Colonic mucosa (tissue), 4 donors: ENCODE measurements at regions of chr4 and their contacts with region 1.

Region 1: GRCh38 chr4:139295206-139295941 is 5.9 kb upstream of the NAA15 start:
- DNase-seq: peak; percentile 99
- H3K4me3 ChIP-seq: peak overlapping the region; percentile 86
- H3K27ac ChIP-seq: peak overlapping the region; percentile 83
- H3K4me1 ChIP-seq: no peaks in the 10 kb centered on the region
- H3K27me3 ChIP-seq: no peaks in the 10 kb centered on the region
- CTCF ChIP-seq: peak; percentile 97

Region 2: GRCh38 chr4:139030614-139031235 is 264.6 kb before region 1 on chr4:
- intact Hi-C with region 1: loop called (anchors 10 kb)
- DNase-seq: peak; percentile 74
- H3K4me3 ChIP-seq: no peak overlapping the region
- H3K27ac ChIP-seq: no peak overlapping the region
- H3K4me1 ChIP-seq: no peaks in the 10 kb centered on the region
- H3K27me3 ChIP-seq: no peaks in the 10 kb centered on the region
- CTCF ChIP-seq: peak; percentile 65

Region 3: DNA sequence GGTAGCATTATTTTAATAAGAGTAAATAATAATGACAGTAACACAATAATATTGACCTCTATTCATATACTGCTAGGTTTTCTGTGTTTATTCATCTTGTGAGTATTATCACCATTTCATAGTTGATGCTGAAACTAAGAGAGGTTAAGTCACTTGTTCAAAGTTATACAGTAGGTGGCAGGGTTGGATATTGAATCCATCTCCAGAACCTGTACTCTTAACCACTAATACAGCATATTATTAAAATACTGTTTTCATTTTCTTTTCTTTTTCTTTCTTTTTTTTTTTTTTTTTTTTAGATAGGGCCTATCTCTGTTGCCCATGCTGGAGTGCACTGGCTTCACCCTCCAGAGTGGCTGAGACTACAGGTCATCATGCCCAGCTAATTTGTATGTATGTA is 111.2 kb before region 1 on chr4:
- intact Hi-C with region 1: loop called (anchors 5 kb)
- DNase-seq: no peak
- H3K4me3 ChIP-seq: no peak overlapping the region
- H3K27ac ChIP-seq: no peak overlapping the region
- H3K4me1 ChIP-seq: no peaks in the 10 kb centered on the region
- H3K27me3 ChIP-seq: no peaks in the 10 kb centered on the region
- CTCF ChIP-seq: no peak

Region 4: DNA sequence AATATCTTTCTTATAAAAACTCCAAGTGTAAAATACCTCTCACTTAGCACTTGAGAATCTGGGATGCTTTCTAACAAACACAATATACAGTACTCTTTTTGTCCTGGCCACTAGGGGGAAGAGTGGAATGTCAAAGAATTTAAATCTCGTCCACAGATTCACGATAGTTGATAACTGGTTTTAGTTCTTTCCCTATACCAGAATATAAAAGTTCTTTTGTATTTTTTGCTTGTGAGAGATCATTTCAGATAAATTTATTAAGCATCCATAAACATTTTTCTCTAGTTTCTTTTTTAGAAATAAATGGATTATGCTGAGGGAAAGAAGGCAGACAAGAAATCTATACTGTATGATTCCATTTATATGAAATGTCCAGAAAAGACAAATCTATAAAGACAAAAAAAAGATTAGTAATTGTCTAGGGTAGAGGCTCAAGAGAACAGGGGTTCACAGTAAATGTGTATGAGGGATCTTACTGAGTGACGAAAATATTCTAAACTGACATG is 65.8 kb before region 1 on chr4:
- intact Hi-C with region 1: loop called (anchors 5 kb)
- DNase-seq: peak; percentile 29
- H3K4me3 ChIP-seq: no peak overlapping the region
- H3K27ac ChIP-seq: no peak overlapping the region
- H3K4me1 ChIP-seq: no peaks in the 10 kb centered on the region
- H3K27me3 ChIP-seq: no peaks in the 10 kb centered on the region
- CTCF ChIP-seq: peak; percentile 77

Region 5: GRCh38 chr4:139416073-139416673 is 120.8 kb after region 1 on chr4:
- intact Hi-C with region 1: no loop called
- DNase-seq: no peak
- H3K4me3 ChIP-seq: no peak overlapping the region
- H3K27ac ChIP-seq: no peak overlapping the region
- H3K4me1 ChIP-seq: no peaks in the 10 kb centered on the region
- H3K27me3 ChIP-seq: no peaks in the 10 kb centered on the region
- CTCF ChIP-seq: peak; percentile 65